CD8-positive, alpha-beta T cell (primary cell): ENCODE measurements at regions of chr12 and their contacts with region 1.

Region 1: GRCh38 chr12:121110211-121110940 is 22.3 kb upstream of the P2RX7 start:
- DNase-seq: peak; percentile 19 to 83 (median 67)
- ATAC-seq: peak; percentile 82
- H3K4me3 ChIP-seq: no peak overlapping the region
- H3K4me3 Mint-ChIP-seq: no peak overlapping the region
- H3K27ac ChIP-seq: no peak overlapping the region
- H3K27ac Mint-ChIP-seq: no peak overlapping the region
- H3K4me1 ChIP-seq: no peaks in the 10 kb centered on the region
- H3K4me1 Mint-ChIP-seq: peaks cover 3% of the 10 kb centered on the region
- H3K27me3 ChIP-seq: no peaks in the 10 kb centered on the region
- H3K27me3 Mint-ChIP-seq: no peaks in the 10 kb centered on the region
- CTCF ChIP-seq: peak; percentile 93

Region 2: GRCh38 chr12:120944645-120945231 is 165.6 kb before region 1 on chr12:
- CTCF ChIA-PET with region 1: interaction called, 8 read pairs
- POLR2A ChIA-PET with region 1: no interaction called
- intact Hi-C with region 1: loop called (anchors 1 kb)
- DNase-seq: peak; percentile 21 to 75 (median 65)
- ATAC-seq: peak; percentile 69
- H3K4me3 ChIP-seq: no peak overlapping the region
- H3K4me3 Mint-ChIP-seq: no peak overlapping the region
- H3K27ac ChIP-seq: no peak overlapping the region
- H3K27ac Mint-ChIP-seq: no peak overlapping the region
- H3K4me1 ChIP-seq: no peaks in the 10 kb centered on the region
- H3K4me1 Mint-ChIP-seq: peaks cover 4% of the 10 kb centered on the region
- H3K27me3 ChIP-seq: no peaks in the 10 kb centered on the region
- H3K27me3 Mint-ChIP-seq: no peaks in the 10 kb centered on the region
- CTCF ChIP-seq: peak; percentile 80

Region 3: DNA sequence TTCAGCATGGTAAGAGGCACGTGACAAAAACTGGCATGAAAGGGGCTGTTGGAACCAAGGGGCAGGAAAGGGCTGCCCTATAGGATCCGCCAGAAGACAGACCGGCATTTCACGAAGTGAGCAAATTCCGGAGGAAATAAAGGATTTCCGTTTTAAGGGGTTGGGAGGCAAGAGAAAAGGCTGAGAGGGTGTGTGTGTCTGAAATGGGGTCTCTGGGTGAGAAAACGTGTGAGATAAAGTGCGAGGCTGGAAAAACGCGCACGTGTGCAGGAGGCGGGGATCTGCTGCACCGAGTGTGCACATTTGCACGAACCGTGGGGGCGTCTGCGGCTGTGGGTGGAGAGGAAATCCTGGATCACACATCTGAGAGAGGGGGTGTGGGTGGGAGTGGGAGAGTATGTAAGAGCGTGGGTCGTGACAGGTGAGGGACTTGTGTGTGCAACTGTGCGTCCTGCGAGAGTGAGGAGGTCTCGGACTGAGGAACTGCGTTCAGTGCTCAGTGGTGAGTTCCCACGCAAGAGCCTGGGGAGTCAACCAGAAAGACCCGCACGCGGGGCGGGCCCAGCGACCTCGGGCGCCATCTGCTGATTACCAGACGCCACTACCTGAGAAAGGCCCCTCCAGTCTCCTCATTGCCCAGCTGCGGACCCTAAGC is 14.7 kb before region 1 on chr12:
- CTCF ChIA-PET with region 1: interaction called, 6 read pairs
- POLR2A ChIA-PET with region 1: no interaction called
- intact Hi-C with region 1: loop called in 1 of 2 experiments (anchors 1 kb)
- DNase-seq: peak; percentile 59 to 88 (median 81)
- ATAC-seq: peak; percentile 78
- H3K4me3 ChIP-seq: peak overlapping the region; percentile 44 to 47
- H3K4me3 Mint-ChIP-seq: peak overlapping the region; percentile 81
- H3K27ac ChIP-seq: no peak overlapping the region
- H3K27ac Mint-ChIP-seq: no peak overlapping the region
- H3K4me1 ChIP-seq: peaks cover 47% of the 10 kb centered on the region
- H3K4me1 Mint-ChIP-seq: peaks cover 49% of the 10 kb centered on the region
- H3K27me3 ChIP-seq: no peaks in the 10 kb centered on the region
- H3K27me3 Mint-ChIP-seq: no peaks in the 10 kb centered on the region
- CTCF ChIP-seq: peak; percentile 81

Region 4: GRCh38 chr12:121223292-121224285 is 113.2 kb after region 1 on chr12:
- CTCF ChIA-PET with region 1: interaction called, 3 read pairs
- POLR2A ChIA-PET with region 1: no interaction called
- intact Hi-C with region 1: loop called (anchors 2 to 5 kb)
- DNase-seq: peak in 6 of 9 experiments; percentile 32 to 72 (median 46)
- ATAC-seq: peak; percentile 58
- H3K4me3 ChIP-seq: no peak overlapping the region
- H3K4me3 Mint-ChIP-seq: peak overlapping the region; percentile 46
- H3K27ac ChIP-seq: peak overlapping the region; percentile 35 to 69
- H3K27ac Mint-ChIP-seq: peak overlapping the region; percentile 95
- H3K4me1 ChIP-seq: peaks cover 41% of the 10 kb centered on the region
- H3K4me1 Mint-ChIP-seq: peaks cover 43% of the 10 kb centered on the region
- H3K27me3 ChIP-seq: no peaks in the 10 kb centered on the region
- H3K27me3 Mint-ChIP-seq: no peaks in the 10 kb centered on the region
- CTCF ChIP-seq: peak; percentile 34

Region 5: GRCh38 chr12:121230538-121230907 is 120.1 kb after region 1 on chr12:
- CTCF ChIA-PET with region 1: interaction called, 3 read pairs
- POLR2A ChIA-PET with region 1: no interaction called
- intact Hi-C with region 1: loop called (anchors 1 to 5 kb)
- DNase-seq: no peak
- ATAC-seq: no peak
- H3K4me3 ChIP-seq: no peak overlapping the region
- H3K4me3 Mint-ChIP-seq: no peak overlapping the region
- H3K27ac ChIP-seq: no peak overlapping the region
- H3K27ac Mint-ChIP-seq: no peak overlapping the region
- H3K4me1 ChIP-seq: peaks cover 31% of the 10 kb centered on the region
- H3K4me1 Mint-ChIP-seq: peaks cover 21% of the 10 kb centered on the region
- H3K27me3 ChIP-seq: no peaks in the 10 kb centered on the region
- H3K27me3 Mint-ChIP-seq: no peaks in the 10 kb centered on the region
- CTCF ChIP-seq: no peak

Region 6: DNA sequence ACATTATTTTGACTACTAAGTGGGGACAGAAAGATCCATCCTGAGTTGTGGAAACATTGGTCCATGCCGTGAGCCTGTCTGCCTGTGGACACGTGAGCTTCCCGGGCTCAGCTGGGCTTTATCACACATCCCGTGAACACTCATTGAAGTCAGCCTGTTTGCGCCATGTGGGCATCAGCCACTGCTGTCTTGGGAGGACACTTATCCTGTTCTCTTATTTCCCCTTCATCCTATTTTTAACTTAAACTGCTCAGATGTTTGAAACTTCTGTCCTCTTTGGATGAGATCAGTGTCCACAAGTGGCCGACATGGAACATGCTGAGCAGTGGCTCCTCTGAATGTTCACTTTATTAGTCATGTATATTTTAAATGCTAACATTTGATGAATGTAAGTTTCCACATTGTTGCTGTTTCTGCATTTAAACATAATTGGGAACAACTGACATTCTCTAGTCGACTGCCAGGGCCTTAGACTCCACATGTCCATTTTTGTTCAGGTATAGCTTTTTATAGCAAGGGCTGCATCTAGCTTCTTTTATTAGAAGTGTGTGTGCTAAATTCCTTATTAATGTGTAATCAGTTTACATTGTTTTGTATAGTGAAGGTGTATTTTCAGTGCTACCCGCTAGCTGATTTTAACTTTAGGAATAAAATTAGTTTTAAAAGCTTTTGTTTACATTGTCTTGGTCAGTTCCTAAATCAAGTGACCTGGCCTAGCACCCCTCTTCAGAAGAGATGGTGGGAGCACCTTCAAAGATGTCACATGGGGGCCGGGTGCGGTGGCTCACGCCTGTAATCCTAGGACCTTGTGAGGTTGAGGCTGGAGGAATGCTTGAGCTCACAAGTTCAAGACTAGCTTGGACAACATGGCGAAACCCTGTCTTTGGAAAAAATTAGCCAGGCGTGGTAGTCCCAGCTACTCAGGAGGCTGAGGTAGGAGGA is 313.6 kb after region 1 on chr12:
- CTCF ChIA-PET with region 1: no interaction called
- POLR2A ChIA-PET with region 1: no interaction called
- intact Hi-C with region 1: no loop called
- DNase-seq: no peak
- ATAC-seq: no peak
- H3K4me3 ChIP-seq: no peak overlapping the region
- H3K4me3 Mint-ChIP-seq: no peak overlapping the region
- H3K27ac ChIP-seq: no peak overlapping the region
- H3K27ac Mint-ChIP-seq: no peak overlapping the region
- H3K4me1 ChIP-seq: no peaks in the 10 kb centered on the region
- H3K4me1 Mint-ChIP-seq: peaks cover 3% of the 10 kb centered on the region
- H3K27me3 ChIP-seq: no peaks in the 10 kb centered on the region
- H3K27me3 Mint-ChIP-seq: no peaks in the 10 kb centered on the region
- CTCF ChIP-seq: no peak